ENCODE measurements at regions of chr20 and their contacts with region 1.

Region 1: GRCh38 chr20:32902456-32903420 is 44.0 kb downstream of the EFCAB8 start:
- DNase-seq: peak; percentile 75
- ATAC-seq: peak; percentile 76
- H3K4me3 ChIP-seq: no peak overlapping the region
- H3K4me3 Mint-ChIP-seq: no peak overlapping the region
- H3K27ac ChIP-seq: no peak overlapping the region
- H3K27ac Mint-ChIP-seq: no peak overlapping the region
- H3K4me1 ChIP-seq: peaks cover 0 to 4% of the 10 kb centered on the region in 2 donors
- H3K4me1 Mint-ChIP-seq: peaks cover 2% of the 10 kb centered on the region
- H3K27me3 ChIP-seq: no peaks in the 10 kb centered on the region
- H3K27me3 Mint-ChIP-seq: no peaks in the 10 kb centered on the region
- CTCF ChIP-seq: peak; percentile 99

Region 2: GRCh38 chr20:33005132-33005566 is 102.4 kb after region 1 on chr20:
- CTCF ChIA-PET with region 1: interaction called, 6 read pairs
- POLR2A ChIA-PET with region 1: no interaction called
- intact Hi-C with region 1: loop called (anchors 2 kb)
- DNase-seq: peak; percentile 22
- ATAC-seq: no peak
- H3K4me3 ChIP-seq: no peak overlapping the region
- H3K4me3 Mint-ChIP-seq: no peak overlapping the region
- H3K27ac ChIP-seq: no peak overlapping the region
- H3K27ac Mint-ChIP-seq: no peak overlapping the region
- H3K4me1 ChIP-seq: peaks cover under 1 to 1% of the 10 kb centered on the region in 2 donors
- H3K4me1 Mint-ChIP-seq: peaks cover 3% of the 10 kb centered on the region
- H3K27me3 ChIP-seq: no peaks in the 10 kb centered on the region
- H3K27me3 Mint-ChIP-seq: no peaks in the 10 kb centered on the region
- CTCF ChIP-seq: peak; percentile 23

Region 3: GRCh38 chr20:33076662-33077372 is 174.1 kb after region 1 on chr20:
- CTCF ChIA-PET with region 1: interaction called, 11 read pairs
- POLR2A ChIA-PET with region 1: no interaction called
- intact Hi-C with region 1: loop called (anchors 1 kb)
- DNase-seq: no peak
- ATAC-seq: no peak
- H3K4me3 ChIP-seq: no peak overlapping the region
- H3K4me3 Mint-ChIP-seq: no peak overlapping the region
- H3K27ac ChIP-seq: no peak overlapping the region
- H3K27ac Mint-ChIP-seq: no peak overlapping the region
- H3K4me1 ChIP-seq: no peaks in the 10 kb centered on the region
- H3K4me1 Mint-ChIP-seq: no peaks in the 10 kb centered on the region
- H3K27me3 ChIP-seq: peaks cover 0 to 4% (median 0%) of the 10 kb centered on the region in 4 experiments
- H3K27me3 Mint-ChIP-seq: peaks cover 12% of the 10 kb centered on the region
- CTCF ChIP-seq: peak; percentile 31

Region 4: GRCh38 chr20:33291830-33292355 is 389.2 kb after region 1 on chr20:
- CTCF ChIA-PET with region 1: interaction called, 17 read pairs
- POLR2A ChIA-PET with region 1: no interaction called
- intact Hi-C with region 1: loop called (anchors 1 kb)
- DNase-seq: peak; percentile 64
- ATAC-seq: no peak
- H3K4me3 ChIP-seq: no peak overlapping the region
- H3K4me3 Mint-ChIP-seq: no peak overlapping the region
- H3K27ac ChIP-seq: no peak overlapping the region
- H3K27ac Mint-ChIP-seq: no peak overlapping the region
- H3K4me1 ChIP-seq: no peaks in the 10 kb centered on the region
- H3K4me1 Mint-ChIP-seq: no peaks in the 10 kb centered on the region
- H3K27me3 ChIP-seq: peaks cover 0 to 9% (median 1%) of the 10 kb centered on the region in 4 experiments
- H3K27me3 Mint-ChIP-seq: peaks cover 25% of the 10 kb centered on the region
- CTCF ChIP-seq: peak; percentile 98

Region 5: DNA sequence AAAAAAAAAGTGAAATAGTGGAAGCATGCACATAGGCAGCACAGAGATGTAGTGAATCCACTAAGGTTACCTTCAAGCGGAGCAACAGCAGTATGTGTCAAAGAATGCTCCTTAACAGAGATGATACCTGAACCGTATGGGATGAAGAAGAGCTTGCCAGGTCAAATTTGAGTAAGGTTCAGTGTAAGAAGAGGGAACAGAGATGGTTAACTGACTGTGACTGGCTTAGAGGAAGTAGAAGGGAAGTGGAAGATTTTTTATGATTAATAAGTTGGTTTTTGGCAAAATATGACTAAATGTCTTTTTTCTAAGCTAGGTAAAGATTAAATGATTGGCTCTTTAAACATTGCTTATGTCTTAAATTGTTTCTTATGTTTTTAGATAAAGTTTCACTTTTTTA is 706.8 kb after region 1 on chr20:
- CTCF ChIA-PET with region 1: no interaction called
- POLR2A ChIA-PET with region 1: no interaction called
- intact Hi-C with region 1: no loop called
- DNase-seq: peak; percentile 40
- ATAC-seq: peak; percentile 31
- H3K4me3 ChIP-seq: no peak overlapping the region
- H3K4me3 Mint-ChIP-seq: peak overlapping the region; percentile 20
- H3K27ac ChIP-seq: peak overlapping the region in 1 of 2 donors; percentile 19
- H3K27ac Mint-ChIP-seq: peak overlapping the region; percentile 3
- H3K4me1 ChIP-seq: peaks cover 54 to 57% of the 10 kb centered on the region in 2 donors
- H3K4me1 Mint-ChIP-seq: peaks cover 53% of the 10 kb centered on the region
- H3K27me3 ChIP-seq: no peaks in the 10 kb centered on the region
- H3K27me3 Mint-ChIP-seq: no peaks in the 10 kb centered on the region
- CTCF ChIP-seq: no peak